Esophagus squamous epithelium (tissue), 5 donors: ENCODE measurements at regions of chr9 and their contacts with region 1.

Region 1: DNA sequence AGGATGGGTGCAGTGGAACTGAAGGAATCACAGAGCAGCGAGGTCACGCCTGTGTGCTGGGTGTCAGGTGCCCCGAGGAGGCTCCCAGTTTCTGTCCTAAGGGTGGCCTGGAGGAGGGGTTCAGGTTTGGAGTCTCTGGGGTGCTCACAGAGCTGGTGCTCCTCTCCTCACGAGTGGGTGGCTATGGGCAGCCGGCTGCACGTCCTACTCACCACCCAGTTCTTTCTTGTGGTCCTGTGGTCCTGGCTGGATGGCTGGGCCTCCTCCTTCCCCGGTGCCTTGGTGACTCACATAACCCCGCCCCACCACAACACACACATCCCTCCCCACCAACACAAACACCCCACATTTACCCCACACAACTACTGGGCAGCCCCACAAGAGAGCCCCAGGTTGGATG is 9.9 kb upstream of the PTGS1 start:
- DNase-seq: no peak
- H3K4me3 ChIP-seq: no peak overlapping the region
- H3K27ac ChIP-seq: no peak overlapping the region
- H3K4me1 ChIP-seq: peaks cover 0 to 25% (median 10%) of the 10 kb centered on the region in 3 donors
- H3K27me3 ChIP-seq: no peaks in the 10 kb centered on the region
- CTCF ChIP-seq: no peak
- POLR2A ChIP-seq: no peak

Region 2: GRCh38 chr9:122453677-122454135 is 92.8 kb after region 1 on chr9:
- intact Hi-C with region 1: loop called (anchors 5 kb)
- DNase-seq: no peak
- H3K4me3 ChIP-seq: no peak overlapping the region
- H3K27ac ChIP-seq: no peak overlapping the region
- H3K4me1 ChIP-seq: peaks cover 0 to 7% (median 0%) of the 10 kb centered on the region in 3 donors
- H3K27me3 ChIP-seq: no peaks in the 10 kb centered on the region
- CTCF ChIP-seq: no peak
- POLR2A ChIP-seq: no peak